ENCODE measurements at regions of chr16 and their contacts with region 1.

Region 1: DNA sequence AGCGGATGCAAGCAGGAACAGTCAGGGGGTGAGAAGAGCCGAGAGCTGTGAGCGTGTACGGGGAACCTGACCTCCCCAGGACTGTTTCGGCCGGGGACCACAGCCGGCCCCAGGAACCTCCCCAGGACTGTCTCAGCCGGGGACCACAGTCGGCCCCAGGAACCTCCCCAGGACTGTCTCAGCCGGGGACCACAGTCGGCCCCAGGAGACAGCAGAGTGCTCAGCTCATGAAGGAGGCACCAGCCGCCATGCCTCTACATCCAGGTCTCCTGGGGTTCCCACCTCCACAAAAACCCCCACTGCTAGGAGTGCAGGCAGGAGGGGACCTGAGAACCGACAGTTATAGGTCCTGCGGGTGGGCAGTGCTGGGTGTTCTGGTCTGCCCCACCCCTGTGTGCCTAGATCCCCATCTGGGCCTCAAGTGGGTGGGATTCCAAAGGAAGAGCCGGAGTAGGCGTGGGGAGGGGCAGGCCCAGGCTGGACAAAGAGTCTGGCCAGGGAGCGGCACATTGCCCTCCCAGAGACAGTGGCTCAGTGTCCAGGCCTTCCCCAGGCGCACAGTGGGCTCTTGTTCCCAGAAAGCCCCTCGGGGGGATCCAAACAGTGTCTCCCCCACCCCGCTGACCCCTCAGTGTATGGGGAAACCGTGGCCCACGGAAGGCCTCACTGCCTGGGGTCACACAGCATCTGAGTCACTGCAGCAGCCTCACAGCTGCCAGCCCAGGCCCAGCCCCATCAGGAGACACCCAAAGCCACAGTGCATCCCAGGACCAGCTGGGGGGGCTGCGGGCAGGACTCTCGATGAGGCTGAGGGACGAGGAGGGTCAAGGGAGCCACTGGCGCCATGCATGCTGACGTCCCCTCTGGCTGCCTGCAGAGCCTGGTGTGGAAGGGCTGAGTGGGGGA is 4.3 kb downstream of the RHBDF1 start:
- DNase-seq: peak in 1 of 2 donors; percentile 72
- H3K4me3 ChIP-seq: no peak overlapping the region
- H3K27ac ChIP-seq: peak overlapping the region in 1 of 5 donors; percentile 34
- H3K4me1 ChIP-seq: peaks cover 25 to 71% (median 57%) of the 10 kb centered on the region in 4 donors
- H3K27me3 ChIP-seq: peaks cover 0 to 22% (median 0%) of the 10 kb centered on the region in 3 donors
- CTCF ChIP-seq: no peak
- EP300 ChIP-seq: no peak
- POLR2A ChIP-seq: no peak

Region 2: DNA sequence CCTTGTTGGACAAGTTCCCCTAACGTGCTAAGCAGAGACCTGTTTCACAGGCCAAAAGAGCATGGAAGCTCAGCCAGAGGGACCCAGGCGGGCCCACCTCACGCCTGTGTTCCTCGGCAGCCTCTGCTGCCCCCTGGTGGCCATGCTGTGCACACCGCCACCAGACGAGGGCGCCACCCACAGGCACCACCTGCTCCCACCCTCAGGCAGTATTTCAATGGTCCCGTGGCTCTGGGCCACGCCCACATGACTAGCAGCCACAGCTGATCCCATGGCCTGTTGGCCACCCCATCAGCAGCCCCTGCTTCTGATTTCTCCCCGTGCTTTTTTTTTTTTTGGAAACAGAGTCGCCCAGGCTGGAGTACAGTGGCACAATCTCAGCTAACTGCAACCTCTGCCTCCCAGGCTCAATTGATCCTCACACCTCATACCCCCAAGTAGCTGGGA is 28.8 kb after region 1 on chr16:
- intact Hi-C with region 1: loop called (anchors 2 kb)
- DNase-seq: peak; percentile 92 to 95
- H3K4me3 ChIP-seq: no peak overlapping the region
- H3K27ac ChIP-seq: no peak overlapping the region
- H3K4me1 ChIP-seq: peaks cover 0 to 21% (median 10%) of the 10 kb centered on the region in 4 donors
- H3K27me3 ChIP-seq: no peaks in the 10 kb centered on the region
- CTCF ChIP-seq: peak in 6 of 7 experiments; percentile 94 to 100 (median 98)
- EP300 ChIP-seq: no peak
- POLR2A ChIP-seq: no peak

Measured in stomach (tissue), 19 donors.